Caco-2 (cell line): ENCODE measurements at regions of chr16 and their contacts with region 1.

Region 1: GRCh38 chr16:17803625-17804024 is 332.9 kb upstream of the XYLT1 start:
- DNase-seq: no peak
- H3K4me3 ChIP-seq: no peak overlapping the region
- H3K4me3 Mint-ChIP-seq: no peak overlapping the region
- H3K27ac Mint-ChIP-seq: no peak overlapping the region
- H3K4me1 ChIP-seq: no peaks in the 10 kb centered on the region
- H3K4me1 Mint-ChIP-seq: no peaks in the 10 kb centered on the region
- H3K27me3 ChIP-seq: no peaks in the 10 kb centered on the region; the same call in 1 of the 2 replicates
- H3K27me3 Mint-ChIP-seq: peaks cover 6% of the 10 kb centered on the region
- CTCF ChIP-seq: no peak

Region 2: GRCh38 chr16:17668386-17668785 is 135.2 kb before region 1 on chr16:
- CTCF ChIA-PET with region 1: no interaction called
- POLR2A ChIA-PET with region 1: no interaction called
- intact Hi-C with region 1: no loop called
- DNase-seq: no peak
- H3K4me3 ChIP-seq: no peak overlapping the region
- H3K4me3 Mint-ChIP-seq: no peak overlapping the region
- H3K27ac Mint-ChIP-seq: no peak overlapping the region
- H3K4me1 ChIP-seq: no peaks in the 10 kb centered on the region
- H3K4me1 Mint-ChIP-seq: no peaks in the 10 kb centered on the region
- H3K27me3 ChIP-seq: no peaks in the 10 kb centered on the region
- H3K27me3 Mint-ChIP-seq: peaks cover 6% of the 10 kb centered on the region
- CTCF ChIP-seq: no peak

Region 3: GRCh38 chr16:17850574-17851250 is 47.1 kb after region 1 on chr16:
- CTCF ChIA-PET with region 1: no interaction called
- POLR2A ChIA-PET with region 1: no interaction called
- intact Hi-C with region 1: loop called (anchors 10 kb)
- DNase-seq: no peak
- H3K4me3 ChIP-seq: no peak overlapping the region
- H3K4me3 Mint-ChIP-seq: no peak overlapping the region
- H3K27ac Mint-ChIP-seq: no peak overlapping the region
- H3K4me1 ChIP-seq: no peaks in the 10 kb centered on the region
- H3K4me1 Mint-ChIP-seq: no peaks in the 10 kb centered on the region
- H3K27me3 ChIP-seq: no peaks in the 10 kb centered on the region
- H3K27me3 Mint-ChIP-seq: peaks cover 18% of the 10 kb centered on the region
- CTCF ChIP-seq: no peak